Activated CD4-positive, alpha-beta memory T cell treated with anti-CD3 and anti-CD28 coated beads, Interleukin-2, amount 10 ng/mL, durations not matched to agents 7 days and 5 days (primary cell): ENCODE measurements at regions of chr11 and their contacts with region 1.

Region 1: GRCh38 chr11:6443269-6444003 is 2.6 kb upstream of the HPX start:
- DNase-seq: peak; percentile 62
- H3K4me3 Mint-ChIP-seq: no peak overlapping the region
- H3K27ac Mint-ChIP-seq: no peak overlapping the region
- H3K4me1 Mint-ChIP-seq: no peaks in the 10 kb centered on the region
- H3K27me3 Mint-ChIP-seq: peaks cover 3% of the 10 kb centered on the region

Region 2: DNA sequence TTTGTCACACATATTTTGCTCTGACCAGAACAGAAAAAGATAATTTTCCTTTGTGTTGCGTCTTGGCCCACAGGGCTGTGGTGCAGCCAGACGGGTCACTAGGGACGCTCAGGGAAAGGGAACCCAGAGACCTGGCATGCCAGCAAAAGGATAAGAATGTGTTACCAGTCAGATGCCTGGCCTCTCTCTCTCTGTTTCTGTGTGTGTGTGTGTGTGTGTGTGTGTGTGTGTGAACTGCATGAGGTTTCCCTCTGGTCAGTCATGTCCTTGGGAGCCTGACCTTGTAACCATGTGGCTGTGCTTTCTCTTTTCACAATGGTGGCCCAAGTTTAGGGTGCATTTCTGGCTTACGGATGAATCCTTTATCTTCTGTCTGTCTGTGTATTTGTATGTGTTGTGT is 158.4 kb before region 1 on chr11:
- CTCF ChIA-PET with region 1: no interaction called
- POLR2A ChIA-PET with region 1: no interaction called
- DNase-seq: no peak
- H3K4me3 Mint-ChIP-seq: no peak overlapping the region
- H3K27ac Mint-ChIP-seq: no peak overlapping the region
- H3K4me1 Mint-ChIP-seq: no peaks in the 10 kb centered on the region
- H3K27me3 Mint-ChIP-seq: peaks cover 61% of the 10 kb centered on the region

Region 3: GRCh38 chr11:6353367-6353987 is 90.0 kb before region 1 on chr11:
- CTCF ChIA-PET with region 1: interaction called, 13 read pairs
- POLR2A ChIA-PET with region 1: interaction called, 3 read pairs
- DNase-seq: peak; percentile 62
- H3K4me3 Mint-ChIP-seq: no peak overlapping the region
- H3K27ac Mint-ChIP-seq: no peak overlapping the region
- H3K4me1 Mint-ChIP-seq: peaks cover 19% of the 10 kb centered on the region
- H3K27me3 Mint-ChIP-seq: no peaks in the 10 kb centered on the region

Region 4: DNA sequence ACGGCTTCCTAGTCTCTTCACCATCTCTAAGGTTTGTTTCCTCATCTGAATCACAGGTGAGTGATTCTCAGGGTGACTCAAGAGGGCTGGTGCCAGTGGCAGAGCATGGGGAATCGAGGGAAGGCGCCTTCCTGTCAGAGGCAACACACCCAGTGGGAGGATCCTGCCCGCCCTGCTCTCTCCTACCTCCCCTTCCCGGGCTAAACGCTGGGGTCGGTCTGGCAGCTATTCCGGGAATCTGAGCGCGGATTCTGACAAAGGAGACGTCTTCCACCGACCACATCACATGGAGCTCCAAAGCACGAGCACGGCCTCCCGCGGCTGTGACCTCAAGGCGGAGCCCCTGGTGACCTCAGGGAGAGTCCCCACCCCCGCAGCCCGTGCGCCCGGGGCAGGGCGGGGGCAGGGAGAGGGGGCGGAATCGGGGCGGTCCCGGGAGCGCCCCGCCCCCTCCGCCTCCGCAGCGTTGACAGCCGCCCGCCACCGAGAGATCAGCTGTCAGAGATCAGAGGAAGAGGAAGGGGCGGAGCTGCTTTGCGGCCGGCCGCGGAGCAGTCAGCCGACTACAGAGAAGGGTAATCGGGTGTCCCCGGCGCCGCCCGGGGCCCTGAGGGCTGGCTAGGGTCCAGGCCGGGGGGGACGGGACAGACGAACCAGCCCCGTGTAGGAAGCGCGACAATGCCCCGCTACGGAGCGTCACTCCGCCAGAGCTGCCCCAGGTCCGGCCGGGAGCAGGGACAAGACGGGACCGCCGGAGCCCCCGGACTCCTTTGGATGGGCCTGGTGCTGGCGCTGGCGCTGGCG is 53.3 kb before region 1 on chr11 and contains the start of gene SMPD1:
- CTCF ChIA-PET with region 1: interaction called, 12 read pairs
- POLR2A ChIA-PET with region 1: interaction called, 5 read pairs
- DNase-seq: peak; percentile 96
- H3K4me3 Mint-ChIP-seq: peak within 1 kb of the TSS; percentile 93
- H3K27ac Mint-ChIP-seq: peak within 1 kb of the TSS; percentile 97
- H3K4me1 Mint-ChIP-seq: peaks cover 43% of the 10 kb centered on the region
- H3K27me3 Mint-ChIP-seq: no peaks in the 10 kb centered on the region
- total RNA-seq, gene SMPD1: 55.1 to 58.5 TPM

Region 5: GRCh38 chr11:6419009-6419631 is 24.3 kb before region 1 on chr11 and contains the start of gene APBB1:
- CTCF ChIA-PET with region 1: interaction called, 33 read pairs
- POLR2A ChIA-PET with region 1: interaction called, 8 read pairs
- DNase-seq: peak; percentile 78
- H3K4me3 Mint-ChIP-seq: peak within 1 kb of the TSS; percentile 75
- H3K27ac Mint-ChIP-seq: peak within 1 kb of the TSS; percentile 17
- H3K4me1 Mint-ChIP-seq: peaks cover 4% of the 10 kb centered on the region
- H3K27me3 Mint-ChIP-seq: peaks cover 28% of the 10 kb centered on the region
- total RNA-seq, gene APBB1: 56.0 to 57.6 TPM

Region 6: DNA sequence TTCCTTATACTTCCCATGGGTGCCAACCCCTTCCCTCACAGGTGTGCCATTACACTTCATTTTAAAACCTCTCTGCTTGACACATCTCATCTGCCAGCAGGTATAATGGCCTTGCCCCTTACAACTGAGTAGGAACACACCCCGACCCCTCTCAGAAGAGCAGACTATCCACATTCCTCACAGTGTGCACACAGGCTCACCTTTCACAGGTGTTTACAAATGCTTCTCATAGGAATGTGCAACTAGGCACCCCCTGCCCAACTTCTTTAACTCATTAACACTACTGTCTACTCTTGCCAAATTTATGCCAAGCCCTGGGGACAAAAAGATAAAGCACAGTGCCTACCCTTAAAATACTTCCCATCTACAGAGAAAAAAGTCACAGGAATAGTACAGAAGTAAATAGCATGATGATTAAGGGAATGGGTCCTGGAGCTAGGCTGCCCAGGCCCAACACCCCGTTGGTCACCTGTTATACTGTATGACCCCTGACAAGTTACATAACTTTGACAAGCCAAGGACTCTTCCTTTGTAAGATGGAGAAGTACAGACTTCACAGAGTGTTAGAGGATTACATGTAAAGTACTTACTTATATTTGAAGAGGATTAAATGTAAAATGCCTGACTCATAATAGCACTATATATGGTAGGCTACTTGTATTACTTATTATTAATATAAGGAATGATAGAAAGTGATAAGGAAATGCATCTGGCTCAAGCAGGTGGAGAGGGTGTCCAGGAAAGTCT is 15.1 kb after region 1 on chr11:
- CTCF ChIA-PET with region 1: interaction called, 36 read pairs
- POLR2A ChIA-PET with region 1: no interaction called
- DNase-seq: no peak
- H3K4me3 Mint-ChIP-seq: no peak overlapping the region
- H3K27ac Mint-ChIP-seq: no peak overlapping the region
- H3K4me1 Mint-ChIP-seq: no peaks in the 10 kb centered on the region
- H3K27me3 Mint-ChIP-seq: no peaks in the 10 kb centered on the region